ENCODE measurements at regions of chr17 and their contacts with region 1.

Region 1: GRCh38 chr17:49694847-49695683 is 12.7 kb downstream of the SLC35B1 start:
- DNase-seq: peak; percentile 72
- H3K4me3 ChIP-seq: no peak overlapping the region
- H3K27ac ChIP-seq: no peak overlapping the region
- H3K4me1 ChIP-seq: peaks cover 4% of the 10 kb centered on the region
- H3K27me3 ChIP-seq: no peaks in the 10 kb centered on the region
- CTCF ChIP-seq: peak; percentile 93

Region 2: DNA sequence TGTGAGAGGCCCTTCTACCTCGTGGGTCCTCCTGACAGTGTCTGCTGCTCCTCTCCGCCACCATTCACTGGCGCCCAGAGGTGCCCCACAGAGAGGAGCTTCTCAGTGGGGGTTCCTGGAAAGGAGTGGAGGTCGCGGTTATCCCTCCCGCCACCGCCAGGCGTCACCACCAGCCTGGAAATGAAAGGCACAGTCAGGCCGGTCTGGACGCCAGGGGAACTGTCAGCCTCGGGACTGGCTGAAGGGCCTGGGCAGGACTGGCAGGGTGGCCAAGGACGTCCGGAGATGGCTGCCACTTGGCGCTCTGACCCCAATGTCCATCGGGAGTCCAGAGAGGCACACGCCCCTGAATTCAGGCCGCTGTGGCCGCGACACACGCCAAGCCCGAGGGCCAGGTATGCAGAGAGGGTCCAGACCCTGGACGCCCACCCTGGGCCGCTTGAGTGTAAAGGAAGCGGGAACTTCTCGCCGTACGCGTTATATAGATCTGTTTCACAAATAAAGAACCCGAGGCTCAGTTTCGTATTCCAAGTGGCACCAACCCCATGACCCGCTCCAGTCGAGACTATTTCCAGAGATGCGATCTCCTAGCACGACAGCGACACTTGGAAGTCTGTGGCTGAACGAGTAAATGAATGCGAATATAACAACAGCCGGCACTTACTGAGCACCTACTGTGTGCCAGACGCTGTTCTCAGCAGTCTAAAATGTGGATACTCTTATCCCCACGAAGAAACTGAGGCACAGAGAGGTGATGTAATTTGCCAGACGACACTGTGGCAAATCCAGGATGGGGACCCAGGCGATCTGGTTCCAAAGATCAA is 127.0 kb before region 1 on chr17:
- intact Hi-C with region 1: loop called (anchors 1 kb)
- DNase-seq: peak; percentile 90
- H3K4me3 ChIP-seq: peak overlapping the region; percentile 29
- H3K27ac ChIP-seq: no peak overlapping the region
- H3K4me1 ChIP-seq: peaks cover 3% of the 10 kb centered on the region
- H3K27me3 ChIP-seq: no peaks in the 10 kb centered on the region
- CTCF ChIP-seq: peak; percentile 96

Region 3: DNA sequence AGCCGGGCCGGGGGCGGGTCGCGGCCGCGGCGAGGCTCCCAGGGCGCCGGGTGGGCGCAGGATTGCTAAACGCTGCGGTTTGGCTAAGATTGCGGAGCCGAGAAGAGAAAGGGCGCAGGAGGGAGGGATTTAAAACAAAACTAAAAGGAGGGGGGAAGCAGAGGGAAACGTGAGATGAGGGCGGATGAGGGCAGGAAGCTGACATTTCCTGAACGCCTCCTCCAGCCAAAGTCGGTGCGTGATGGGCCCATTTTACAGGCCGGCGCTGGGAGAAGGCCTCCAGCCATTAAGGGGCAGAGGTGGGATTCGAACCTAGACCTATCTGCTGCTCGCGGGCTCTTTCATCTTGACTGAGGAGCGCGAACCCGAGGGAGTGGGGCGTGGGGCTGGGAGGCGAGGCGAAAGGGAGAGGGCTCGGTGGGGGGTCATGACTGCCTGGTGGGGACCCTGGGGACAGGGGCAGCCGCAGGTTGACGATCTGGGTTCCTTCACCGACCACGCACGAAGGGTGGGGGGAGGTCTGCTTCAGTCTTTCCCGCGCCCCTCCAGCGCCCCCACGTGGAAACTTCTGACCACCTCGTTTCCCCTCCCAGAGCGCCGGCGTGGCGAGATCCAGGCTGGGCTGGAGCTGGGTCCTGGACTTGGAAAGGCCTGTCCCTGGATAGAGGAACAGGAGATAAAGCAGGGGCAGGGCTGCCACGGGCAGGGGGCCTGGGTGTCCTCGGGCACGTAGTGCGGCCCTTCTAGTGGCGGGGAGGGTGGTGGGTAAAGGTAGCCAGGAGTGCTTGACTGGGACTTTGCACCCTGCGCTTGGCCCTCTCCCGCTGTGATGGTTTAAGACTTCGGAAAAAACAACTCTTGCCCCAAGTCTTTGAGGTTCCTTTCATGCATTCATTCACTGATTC is 156.6 kb after region 1 on chr17:
- intact Hi-C with region 1: loop called (anchors 10 kb)
- DNase-seq: peak; percentile 73
- H3K4me3 ChIP-seq: peak overlapping the region; percentile 40
- H3K27ac ChIP-seq: no peak overlapping the region
- H3K4me1 ChIP-seq: no peaks in the 10 kb centered on the region
- H3K27me3 ChIP-seq: no peaks in the 10 kb centered on the region
- CTCF ChIP-seq: peak; percentile 42

Region 4: DNA sequence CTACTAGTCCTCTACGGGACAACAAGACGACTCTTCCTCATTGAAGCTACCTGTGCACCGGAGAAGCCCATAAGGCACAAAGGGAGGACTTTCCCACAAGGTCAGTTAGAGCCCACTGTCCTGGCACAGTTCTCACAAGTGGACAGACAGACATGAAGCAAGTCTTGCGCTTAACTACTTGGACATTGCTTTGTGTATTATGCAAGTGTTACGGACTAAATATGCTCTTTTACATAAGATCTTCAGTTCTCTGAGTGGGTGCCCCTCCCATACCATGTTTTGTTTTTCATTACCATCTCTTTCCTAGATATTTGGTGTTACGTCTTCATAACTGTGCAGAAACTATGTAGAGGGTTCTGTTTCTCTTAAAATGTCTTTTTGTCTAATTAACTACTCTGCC is 1054.2 kb after region 1 on chr17:
- intact Hi-C with region 1: no loop called
- DNase-seq: no peak
- H3K4me3 ChIP-seq: no peak overlapping the region
- H3K27ac ChIP-seq: no peak overlapping the region
- H3K4me1 ChIP-seq: no peaks in the 10 kb centered on the region
- H3K27me3 ChIP-seq: no peaks in the 10 kb centered on the region
- CTCF ChIP-seq: no peak